ENCODE measurements at regions of chr21 and their contacts with region 1.

Region 1: GRCh38 chr21:17679002-17679600 is 66.4 kb upstream of the BTG3 start:
- DNase-seq: no peak
- H3K4me3 Mint-ChIP-seq: no peak overlapping the region
- H3K27ac Mint-ChIP-seq: no peak overlapping the region
- H3K4me1 Mint-ChIP-seq: no peaks in the 10 kb centered on the region
- H3K27me3 Mint-ChIP-seq: no peaks in the 10 kb centered on the region

Region 2: DNA sequence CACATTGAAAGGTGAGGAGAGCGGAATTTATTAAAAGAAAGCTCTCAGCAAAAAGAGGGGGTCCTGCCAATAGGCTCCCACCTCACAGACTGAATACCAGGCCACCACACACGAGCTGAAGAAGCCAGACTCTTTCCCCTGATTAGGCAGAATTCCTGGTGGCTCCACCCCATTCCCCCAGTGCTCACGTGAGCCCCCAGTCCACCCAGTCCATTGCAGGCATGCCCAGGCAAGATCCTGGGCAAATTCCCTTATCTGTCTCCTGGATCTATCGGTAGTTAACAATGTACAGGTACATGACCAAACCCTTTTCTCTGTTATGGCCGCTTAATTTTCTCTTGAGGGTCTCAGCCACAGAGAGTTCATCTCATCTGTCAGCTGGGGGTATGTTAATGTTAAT is 11.8 kb before region 1 on chr21:
- CTCF ChIA-PET with region 1: interaction called, 10 read pairs
- POLR2A ChIA-PET with region 1: no interaction called
- intact Hi-C with region 1: no loop called
- DNase-seq: no peak
- H3K4me3 Mint-ChIP-seq: no peak overlapping the region
- H3K27ac Mint-ChIP-seq: no peak overlapping the region
- H3K4me1 Mint-ChIP-seq: peaks cover 2% of the 10 kb centered on the region
- H3K27me3 Mint-ChIP-seq: no peaks in the 10 kb centered on the region

Region 3: DNA sequence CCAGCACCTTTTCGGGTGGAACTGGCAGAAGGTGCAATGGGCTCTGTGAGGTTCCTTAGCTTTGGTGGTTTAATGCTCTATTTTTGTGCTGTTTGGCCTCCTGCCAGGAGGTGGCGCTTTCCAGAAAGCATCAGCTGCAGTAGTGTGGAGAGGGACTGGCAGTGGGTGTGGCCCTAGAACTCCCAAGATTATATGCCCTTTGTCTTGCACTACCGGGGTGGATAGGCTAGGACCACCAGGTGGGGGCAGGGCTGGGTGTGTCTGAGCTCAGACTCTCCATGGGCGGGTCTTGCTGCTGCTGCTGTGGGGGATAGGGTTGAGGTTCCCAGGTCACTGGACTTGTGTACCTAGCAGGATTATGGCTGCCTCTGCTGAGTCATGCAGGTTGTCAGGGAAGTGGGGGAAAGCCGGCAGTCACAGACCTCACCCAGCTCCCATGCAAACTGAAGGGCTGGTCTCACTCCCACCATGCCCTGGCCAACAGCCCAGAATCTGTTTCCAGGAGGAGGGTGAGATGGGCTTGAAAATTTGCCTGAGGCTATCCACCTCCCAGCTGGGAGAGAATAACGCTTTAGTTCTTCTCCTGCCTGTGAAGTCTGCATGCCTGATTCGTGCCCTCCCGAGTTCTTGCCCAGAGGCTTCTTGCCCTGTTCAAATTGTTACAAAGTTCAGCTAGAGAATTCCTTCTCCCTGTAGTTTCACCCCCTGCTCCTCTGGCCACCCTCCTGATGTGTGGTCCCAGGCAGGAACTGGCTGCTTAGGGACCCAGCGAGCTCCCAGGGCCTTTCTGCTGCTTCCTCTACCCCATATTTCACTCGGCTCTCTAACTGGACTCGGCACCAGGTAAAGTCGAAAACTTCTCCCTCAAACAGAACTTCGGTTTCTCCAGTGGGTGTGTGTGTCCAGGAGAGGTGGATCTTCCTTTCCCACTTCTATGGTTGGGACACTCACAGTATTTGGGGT is 10.1 kb after region 1 on chr21:
- CTCF ChIA-PET with region 1: interaction called, 25 read pairs
- POLR2A ChIA-PET with region 1: no interaction called
- intact Hi-C with region 1: no loop called
- DNase-seq: peak; percentile 71
- H3K4me3 Mint-ChIP-seq: no peak overlapping the region
- H3K27ac Mint-ChIP-seq: no peak overlapping the region
- H3K4me1 Mint-ChIP-seq: peaks cover 32% of the 10 kb centered on the region
- H3K27me3 Mint-ChIP-seq: no peaks in the 10 kb centered on the region

Region 4: GRCh38 chr21:17903029-17903806 is 224.1 kb after region 1 on chr21:
- CTCF ChIA-PET with region 1: interaction called, 33 read pairs
- POLR2A ChIA-PET with region 1: no interaction called
- intact Hi-C with region 1: loop called (anchors 1 kb)
- DNase-seq: no peak
- H3K4me3 Mint-ChIP-seq: no peak overlapping the region
- H3K27ac Mint-ChIP-seq: no peak overlapping the region
- H3K4me1 Mint-ChIP-seq: peaks cover 6% of the 10 kb centered on the region
- H3K27me3 Mint-ChIP-seq: no peaks in the 10 kb centered on the region

Region 5: DNA sequence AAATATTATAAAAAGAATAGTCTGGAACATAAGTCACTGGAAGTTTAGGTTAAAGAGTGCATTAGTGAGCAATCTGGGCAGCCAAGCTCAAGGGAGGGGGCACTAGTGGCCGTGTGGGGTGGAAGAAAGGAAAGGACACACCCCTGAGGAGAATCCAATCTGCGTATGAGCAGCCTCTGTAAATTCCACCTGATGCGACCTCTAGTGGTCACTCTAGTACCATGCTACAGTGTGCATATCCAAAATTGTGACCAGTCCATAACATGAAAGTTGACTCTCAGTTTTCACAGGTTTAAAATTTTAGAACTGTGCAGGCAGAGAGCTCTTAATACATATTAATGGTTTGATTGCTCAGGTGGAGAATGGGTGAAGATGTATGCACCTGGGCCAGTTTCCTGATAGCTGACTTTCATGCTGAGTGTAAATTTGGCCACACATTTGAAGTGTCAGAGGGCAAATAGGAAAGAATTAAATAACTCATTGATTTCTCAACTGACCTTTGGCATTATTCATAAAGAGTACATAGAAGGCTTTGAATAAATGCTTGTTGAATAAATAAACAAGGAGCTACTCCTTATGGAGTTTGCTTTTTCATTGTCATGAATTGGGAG is 246.0 kb after region 1 on chr21:
- CTCF ChIA-PET with region 1: interaction called, 99 read pairs
- POLR2A ChIA-PET with region 1: no interaction called
- intact Hi-C with region 1: loop called (anchors 1 kb)
- DNase-seq: peak; percentile 54
- H3K4me3 Mint-ChIP-seq: no peak overlapping the region
- H3K27ac Mint-ChIP-seq: no peak overlapping the region
- H3K4me1 Mint-ChIP-seq: no peaks in the 10 kb centered on the region
- H3K27me3 Mint-ChIP-seq: no peaks in the 10 kb centered on the region

Measured in activated CD4-positive, alpha-beta memory T cell treated with anti-CD3 and anti-CD28 coated beads for 36 hours (primary cell).